CD8-positive, alpha-beta T cell (primary cell): ENCODE measurements at regions of chr4 and their contacts with region 1.

Region 1: GRCh38 chr4:108570993-108571569 is 49.3 kb upstream of the RPL34 start:
- DNase-seq: no peak
- ATAC-seq: no peak
- H3K4me3 ChIP-seq: no peak overlapping the region
- H3K4me3 Mint-ChIP-seq: no peak overlapping the region
- H3K27ac ChIP-seq: no peak overlapping the region
- H3K27ac Mint-ChIP-seq: no peak overlapping the region
- H3K4me1 ChIP-seq: peaks cover 26% of the 10 kb centered on the region
- H3K4me1 Mint-ChIP-seq: peaks cover 31% of the 10 kb centered on the region
- H3K27me3 ChIP-seq: peaks cover 0 to 2% of the 10 kb centered on the region in 2 experiments
- H3K27me3 Mint-ChIP-seq: no peaks in the 10 kb centered on the region
- CTCF ChIP-seq: no peak

Region 2: DNA sequence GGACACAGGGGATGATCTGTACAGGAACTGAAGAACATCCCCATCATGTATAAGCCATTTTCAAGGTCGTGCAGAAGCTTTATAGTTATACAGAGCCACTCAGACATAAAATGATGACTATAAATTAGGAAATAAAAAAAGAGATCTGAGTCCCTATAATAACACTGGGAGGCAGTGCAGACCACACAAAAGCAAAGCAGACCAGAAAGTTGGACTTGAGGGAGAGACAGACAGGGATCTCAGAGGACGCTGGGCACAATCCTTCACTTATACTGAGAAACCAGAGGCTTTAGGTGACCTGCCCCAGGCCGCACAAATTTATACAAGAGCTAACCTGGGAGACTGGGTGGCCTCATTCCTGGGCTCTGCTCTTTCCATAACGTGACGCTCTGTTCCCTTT is 510.9 kb before region 1 on chr4:
- CTCF ChIA-PET with region 1: interaction called, 14 read pairs
- POLR2A ChIA-PET with region 1: no interaction called
- intact Hi-C with region 1: no loop called
- DNase-seq: peak in 2 of 9 experiments; percentile 33 to 51
- ATAC-seq: no peak
- H3K4me3 ChIP-seq: no peak overlapping the region
- H3K4me3 Mint-ChIP-seq: no peak overlapping the region
- H3K27ac ChIP-seq: no peak overlapping the region
- H3K27ac Mint-ChIP-seq: peak overlapping the region; percentile 81
- H3K4me1 ChIP-seq: peaks cover 92% of the 10 kb centered on the region
- H3K4me1 Mint-ChIP-seq: peaks cover 87% of the 10 kb centered on the region
- H3K27me3 ChIP-seq: no peaks in the 10 kb centered on the region
- H3K27me3 Mint-ChIP-seq: no peaks in the 10 kb centered on the region
- CTCF ChIP-seq: no peak

Region 3: DNA sequence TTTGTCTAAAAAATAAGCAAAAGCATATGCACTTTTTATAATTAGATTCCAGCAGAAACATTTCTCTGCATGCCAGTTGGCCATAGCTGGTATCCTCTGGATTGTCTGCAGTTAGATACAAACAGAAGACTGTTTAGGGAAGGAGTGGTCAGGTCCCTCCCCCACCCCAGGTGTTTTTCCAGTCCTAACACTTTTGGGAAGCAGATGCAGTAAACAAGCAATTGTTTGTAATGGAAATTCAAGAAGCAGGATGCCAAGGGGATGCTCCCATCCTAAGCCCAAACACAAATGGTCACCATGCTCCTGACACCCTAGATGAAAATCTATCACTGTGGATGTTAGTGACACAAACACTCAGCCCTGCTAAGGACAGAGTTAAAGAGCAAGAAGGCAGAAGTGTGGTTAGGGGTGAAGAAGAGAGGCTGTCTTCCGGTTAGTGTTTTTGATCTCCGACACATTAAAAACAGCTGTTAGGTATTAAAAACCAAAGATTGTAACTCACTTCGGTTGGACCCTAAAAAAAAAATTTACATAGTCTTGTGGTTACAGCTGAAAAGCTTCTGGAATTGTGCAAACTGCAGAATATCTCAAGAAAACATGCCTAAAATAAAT is 410.2 kb before region 1 on chr4:
- CTCF ChIA-PET with region 1: interaction called, 12 read pairs
- POLR2A ChIA-PET with region 1: interaction called, 3 read pairs
- intact Hi-C with region 1: no loop called
- DNase-seq: peak in 2 of 9 experiments; percentile 40 to 65
- ATAC-seq: peak; percentile 40
- H3K4me3 ChIP-seq: peak overlapping the region; percentile 73 to 78
- H3K4me3 Mint-ChIP-seq: peak overlapping the region; percentile 83
- H3K27ac ChIP-seq: peak overlapping the region in 1 of 2 experiments; percentile 28
- H3K27ac Mint-ChIP-seq: peak overlapping the region; percentile 91
- H3K4me1 ChIP-seq: peaks cover 37% of the 10 kb centered on the region
- H3K4me1 Mint-ChIP-seq: peaks cover 71% of the 10 kb centered on the region
- H3K27me3 ChIP-seq: peaks cover 0 to 8% of the 10 kb centered on the region in 2 experiments
- H3K27me3 Mint-ChIP-seq: no peaks in the 10 kb centered on the region
- CTCF ChIP-seq: no peak

Region 4: GRCh38 chr4:108512615-108513505 is 58.2 kb before region 1 on chr4:
- CTCF ChIA-PET with region 1: interaction called, 7 read pairs
- POLR2A ChIA-PET with region 1: interaction called, 3 read pairs
- intact Hi-C with region 1: loop called in 1 of 2 experiments (anchors 1 kb)
- DNase-seq: peak in 8 of 9 experiments; percentile 18 to 71 (median 54)
- ATAC-seq: peak; percentile 93
- H3K4me3 ChIP-seq: peak overlapping the region in 1 of 2 experiments; percentile 17
- H3K4me3 Mint-ChIP-seq: peak overlapping the region; percentile 82
- H3K27ac ChIP-seq: no peak overlapping the region
- H3K27ac Mint-ChIP-seq: peak overlapping the region; percentile 57
- H3K4me1 ChIP-seq: peaks cover 16% of the 10 kb centered on the region
- H3K4me1 Mint-ChIP-seq: peaks cover 29% of the 10 kb centered on the region
- H3K27me3 ChIP-seq: no peaks in the 10 kb centered on the region
- H3K27me3 Mint-ChIP-seq: no peaks in the 10 kb centered on the region
- CTCF ChIP-seq: peak; percentile 53

Region 5: DNA sequence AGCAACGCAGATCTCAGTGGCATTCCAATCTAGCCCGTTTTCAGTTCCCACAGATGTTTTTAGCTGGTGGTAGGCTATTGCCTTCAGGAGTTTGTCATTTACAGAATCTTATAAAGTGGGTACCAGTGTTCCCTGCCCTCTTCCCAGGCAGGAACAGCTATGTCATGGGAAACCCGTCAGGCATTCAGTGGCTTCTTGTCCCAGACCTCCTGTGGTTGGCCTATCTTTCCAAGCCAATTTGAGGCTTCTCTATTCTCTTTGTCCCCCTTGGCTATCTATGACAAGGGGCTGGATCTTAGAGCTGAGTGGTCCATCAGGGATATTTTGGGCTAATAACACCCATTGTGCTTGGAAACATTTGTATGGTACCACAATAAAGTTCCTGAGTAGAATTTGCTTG is 15.7 kb after region 1 on chr4:
- CTCF ChIA-PET with region 1: interaction called, 37 read pairs
- POLR2A ChIA-PET with region 1: no interaction called
- intact Hi-C with region 1: no loop called
- DNase-seq: no peak
- ATAC-seq: no peak
- H3K4me3 ChIP-seq: no peak overlapping the region
- H3K4me3 Mint-ChIP-seq: no peak overlapping the region
- H3K27ac ChIP-seq: no peak overlapping the region
- H3K27ac Mint-ChIP-seq: no peak overlapping the region
- H3K4me1 ChIP-seq: no peaks in the 10 kb centered on the region
- H3K4me1 Mint-ChIP-seq: no peaks in the 10 kb centered on the region
- H3K27me3 ChIP-seq: no peaks in the 10 kb centered on the region
- H3K27me3 Mint-ChIP-seq: no peaks in the 10 kb centered on the region
- CTCF ChIP-seq: no peak